Sciatic nerve (tissue), 2 donors: ENCODE measurements at regions of chr11 and their contacts with region 1.

Region 1: GRCh38 chr11:5452712-5453111 is 3.6 kb downstream of the OR51I2 start:
- DNase-seq: no peak
- ATAC-seq: no peak

Region 2: GRCh38 chr11:5486421-5486820 is 33.7 kb after region 1 on chr11:
- intact Hi-C with region 1: loop called (anchors 2 kb)
- DNase-seq: no peak
- ATAC-seq: no peak